B cell (primary cell): ENCODE measurements at regions of chr16 and their contacts with region 1.

Region 1: GRCh38 chr16:83807710-83808572 is at the start of gene HSBP1:
- DNase-seq: peak; percentile 93
- ATAC-seq: peak; percentile 94
- H3K4me3 ChIP-seq: peak within 1 kb of the TSS; percentile 62 to 93 (median 83)
- H3K4me3 Mint-ChIP-seq: peak within 1 kb of the TSS; percentile 97
- H3K27ac ChIP-seq: peak within 1 kb of the TSS; percentile 78 to 91
- H3K27ac Mint-ChIP-seq: peak within 1 kb of the TSS; percentile 98
- H3K4me1 ChIP-seq: peaks cover 50 to 55% of the 10 kb centered on the region in 2 donors
- H3K4me1 Mint-ChIP-seq: peaks cover 62% of the 10 kb centered on the region
- H3K27me3 ChIP-seq: no peaks in the 10 kb centered on the region
- H3K27me3 Mint-ChIP-seq: no peaks in the 10 kb centered on the region
- CTCF ChIP-seq: no peak
- total RNA-seq, gene HSBP1: 39.6 and 45.4 TPM in 2 replicates

Region 2: DNA sequence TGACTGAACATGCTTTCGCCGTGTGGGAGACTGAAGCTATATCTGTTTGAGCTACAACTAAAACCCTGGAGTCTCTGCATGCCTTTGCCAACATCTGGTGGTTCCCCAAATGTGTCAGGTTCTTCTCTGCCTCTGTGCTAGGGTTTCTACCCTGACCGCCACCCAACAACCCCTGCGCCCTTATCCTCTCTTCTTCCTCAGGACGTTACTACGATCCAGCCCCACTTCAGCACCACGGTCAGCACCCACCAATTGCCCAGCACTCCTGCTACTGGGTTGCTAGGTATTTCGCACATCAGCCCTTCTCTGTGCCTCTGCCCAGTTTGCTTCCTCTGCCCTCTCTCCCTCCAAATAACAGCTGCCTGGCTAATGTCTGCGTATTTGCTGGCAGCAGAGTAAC is 106.4 kb before region 1 on chr16:
- CTCF ChIA-PET with region 1: no interaction called
- POLR2A ChIA-PET with region 1: no interaction called
- intact Hi-C with region 1: no loop called
- DNase-seq: peak; percentile 3
- ATAC-seq: no peak
- H3K4me3 ChIP-seq: no peak overlapping the region
- H3K4me3 Mint-ChIP-seq: no peak overlapping the region
- H3K27ac ChIP-seq: no peak overlapping the region
- H3K27ac Mint-ChIP-seq: no peak overlapping the region
- H3K4me1 ChIP-seq: no peaks in the 10 kb centered on the region
- H3K4me1 Mint-ChIP-seq: no peaks in the 10 kb centered on the region
- H3K27me3 ChIP-seq: peaks cover 0 to 10% (median 3%) of the 10 kb centered on the region in 4 experiments
- H3K27me3 Mint-ChIP-seq: peaks cover 17% of the 10 kb centered on the region
- CTCF ChIP-seq: no peak

Region 3: DNA sequence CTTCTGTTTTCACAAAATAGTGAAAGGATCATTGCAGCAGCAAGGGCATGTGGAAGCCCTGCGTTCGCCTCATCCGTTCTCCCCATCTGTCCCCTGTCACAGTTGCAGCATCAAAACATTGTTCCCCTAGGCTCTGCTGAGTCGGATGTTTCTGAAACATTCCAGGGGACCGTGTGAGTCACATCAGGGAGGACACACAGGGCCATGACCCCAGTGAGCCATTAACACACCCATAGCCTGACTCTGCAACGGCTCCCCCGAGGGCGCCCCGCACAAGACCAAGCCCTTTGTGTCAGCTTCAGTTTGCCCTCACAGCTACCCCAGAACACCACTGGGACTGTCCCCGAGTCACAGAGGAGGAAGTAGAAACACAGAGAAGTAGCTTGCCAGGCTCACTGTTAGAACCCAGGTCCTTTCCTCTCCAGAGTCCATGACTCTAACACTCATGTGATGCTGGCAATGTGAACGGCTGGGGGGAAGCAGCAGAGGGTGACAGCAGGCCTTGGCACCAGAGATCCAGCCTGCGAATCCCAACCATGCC is 63.4 kb before region 1 on chr16:
- CTCF ChIA-PET with region 1: no interaction called
- POLR2A ChIA-PET with region 1: no interaction called
- intact Hi-C with region 1: loop called (anchors 10 kb)
- DNase-seq: peak; percentile 61
- ATAC-seq: peak; percentile 91
- H3K4me3 ChIP-seq: no peak overlapping the region
- H3K4me3 Mint-ChIP-seq: peak overlapping the region; percentile 60
- H3K27ac ChIP-seq: peak overlapping the region; percentile 18 to 56
- H3K27ac Mint-ChIP-seq: peak overlapping the region; percentile 7
- H3K4me1 ChIP-seq: peaks cover 12 to 16% of the 10 kb centered on the region in 2 donors
- H3K4me1 Mint-ChIP-seq: peaks cover 15% of the 10 kb centered on the region
- H3K27me3 ChIP-seq: peaks cover 0 to 9% (median 2%) of the 10 kb centered on the region in 4 experiments
- H3K27me3 Mint-ChIP-seq: peaks cover 10% of the 10 kb centered on the region
- CTCF ChIP-seq: no peak

Region 4: DNA sequence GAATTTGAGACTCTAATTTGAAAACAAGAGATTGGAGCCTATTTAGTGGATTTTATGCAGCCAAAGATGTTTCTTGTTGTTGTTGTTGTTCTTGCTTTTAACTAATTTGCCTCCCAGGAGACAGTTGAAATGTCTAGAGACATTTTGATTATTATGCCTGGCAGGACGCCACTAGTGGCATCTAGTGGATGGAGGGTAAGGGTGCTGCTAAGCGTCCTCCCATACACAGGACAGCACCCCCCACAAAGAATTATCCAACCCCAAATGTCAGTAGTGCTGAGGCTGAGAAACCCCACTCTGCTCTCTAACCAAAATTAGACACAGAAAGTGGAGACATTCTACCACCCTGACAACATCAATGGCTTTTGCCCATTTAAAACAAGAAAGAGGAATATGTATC is 15.6 kb before region 1 on chr16:
- CTCF ChIA-PET with region 1: no interaction called
- POLR2A ChIA-PET with region 1: no interaction called
- intact Hi-C with region 1: no loop called
- DNase-seq: no peak
- ATAC-seq: no peak
- H3K4me3 ChIP-seq: no peak overlapping the region
- H3K4me3 Mint-ChIP-seq: no peak overlapping the region
- H3K27ac ChIP-seq: no peak overlapping the region
- H3K27ac Mint-ChIP-seq: no peak overlapping the region
- H3K4me1 ChIP-seq: no peaks in the 10 kb centered on the region
- H3K4me1 Mint-ChIP-seq: no peaks in the 10 kb centered on the region
- H3K27me3 ChIP-seq: no peaks in the 10 kb centered on the region
- H3K27me3 Mint-ChIP-seq: no peaks in the 10 kb centered on the region
- CTCF ChIP-seq: no peak

Region 5: GRCh38 chr16:83826146-83826913 is 18.4 kb after region 1 on chr16:
- CTCF ChIA-PET with region 1: interaction called, 11 read pairs
- POLR2A ChIA-PET with region 1: interaction called, 6 read pairs
- intact Hi-C with region 1: loop called (anchors 2 kb)
- DNase-seq: peak; percentile 83
- ATAC-seq: peak; percentile 94
- H3K4me3 ChIP-seq: no peak overlapping the region
- H3K4me3 Mint-ChIP-seq: no peak overlapping the region
- H3K27ac ChIP-seq: no peak overlapping the region
- H3K27ac Mint-ChIP-seq: peak overlapping the region; percentile 55
- H3K4me1 ChIP-seq: peaks cover 0 to 11% of the 10 kb centered on the region in 2 donors
- H3K4me1 Mint-ChIP-seq: peaks cover 6% of the 10 kb centered on the region
- H3K27me3 ChIP-seq: peaks cover 0 to 2% (median 0%) of the 10 kb centered on the region in 4 experiments
- H3K27me3 Mint-ChIP-seq: peaks cover 8% of the 10 kb centered on the region
- CTCF ChIP-seq: peak; percentile 98

Region 6: DNA sequence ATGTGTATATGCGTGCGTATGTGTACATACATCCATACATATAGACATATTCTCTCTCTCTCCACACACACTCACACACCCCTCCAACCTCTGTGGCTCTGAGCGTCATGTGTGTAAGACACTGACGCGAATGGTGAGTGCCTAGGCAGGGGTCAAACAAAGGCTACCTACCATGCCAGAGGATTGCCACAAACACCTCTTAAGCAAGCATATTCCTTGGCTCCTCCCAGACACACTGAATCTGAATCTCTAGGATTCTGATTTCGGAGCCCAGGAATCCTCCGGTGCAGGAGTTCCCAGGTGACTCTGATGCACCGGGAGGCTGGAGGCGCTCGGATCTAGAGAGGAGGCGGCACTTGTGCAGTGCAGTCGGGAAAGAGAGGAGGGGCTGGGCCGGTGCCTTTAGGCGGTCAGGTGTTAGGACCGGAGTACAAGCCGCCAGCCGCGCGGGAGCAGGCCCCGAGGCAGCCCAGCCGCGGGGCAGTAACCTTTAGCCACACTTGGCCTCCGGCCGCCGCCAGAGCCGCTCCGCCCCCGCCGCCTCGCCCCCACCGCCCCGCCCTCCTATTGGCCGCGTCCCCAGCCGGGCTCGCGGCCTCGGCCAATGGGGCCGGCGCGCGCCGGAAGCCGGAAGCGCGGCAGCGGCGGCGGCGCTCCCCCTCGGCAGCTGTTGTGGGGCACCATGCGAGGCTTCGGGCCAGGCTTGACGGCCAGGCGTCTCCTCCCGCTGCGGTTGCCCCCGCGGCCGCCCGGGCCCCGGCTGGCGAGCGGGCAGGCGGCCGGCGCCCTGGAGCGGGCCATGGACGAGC is 90.7 kb after region 1 on chr16 and contains the start of gene MLYCD:
- CTCF ChIA-PET with region 1: no interaction called
- POLR2A ChIA-PET with region 1: interaction called, 4 read pairs
- intact Hi-C with region 1: loop called (anchors 1 kb)
- DNase-seq: peak; percentile 82
- ATAC-seq: peak; percentile 96
- H3K4me3 ChIP-seq: peak within 1 kb of the TSS; percentile 60 to 79 (median 69)
- H3K4me3 Mint-ChIP-seq: peak within 1 kb of the TSS; percentile 91
- H3K27ac ChIP-seq: peak within 1 kb of the TSS; percentile 41 to 58
- H3K27ac Mint-ChIP-seq: peak within 1 kb of the TSS; percentile 72
- H3K4me1 ChIP-seq: peaks cover 19 to 20% of the 10 kb centered on the region in 2 donors
- H3K4me1 Mint-ChIP-seq: peaks cover 30% of the 10 kb centered on the region
- H3K27me3 ChIP-seq: no peaks in the 10 kb centered on the region
- H3K27me3 Mint-ChIP-seq: peaks cover 13% of the 10 kb centered on the region
- CTCF ChIP-seq: no peak
- total RNA-seq, gene MLYCD: 16.8 and 17.1 TPM in 2 replicates

Region 7: GRCh38 chr16:84144859-84145639 is 337.1 kb after region 1 on chr16 and contains the starts of genes DNAAF1 and HSDL1:
- CTCF ChIA-PET with region 1: no interaction called
- POLR2A ChIA-PET with region 1: no interaction called
- intact Hi-C with region 1: loop called (anchors 1 kb)
- DNase-seq: peak; percentile 96
- ATAC-seq: peak; percentile 88
- H3K4me3 ChIP-seq: peak within 1 kb of the TSS; percentile 46 to 80 (median 75)
- H3K4me3 Mint-ChIP-seq: peak within 1 kb of the TSS; percentile 96
- H3K27ac ChIP-seq: peak within 1 kb of the TSS; percentile 34 to 86
- H3K27ac Mint-ChIP-seq: peak within 1 kb of the TSS; percentile 91
- H3K4me1 ChIP-seq: peaks cover 3 to 14% of the 10 kb centered on the region in 2 donors
- H3K4me1 Mint-ChIP-seq: peaks cover 14% of the 10 kb centered on the region
- H3K27me3 ChIP-seq: peaks cover 0 to 2% (median 0%) of the 10 kb centered on the region in 4 experiments
- H3K27me3 Mint-ChIP-seq: peaks cover 16% of the 10 kb centered on the region
- CTCF ChIP-seq: no peak
- total RNA-seq, gene DNAAF1: 0.29 and 0.30 TPM in 2 replicates
- total RNA-seq, gene HSDL1: 30.8 and 40.2 TPM in 2 replicates

Region 8: DNA sequence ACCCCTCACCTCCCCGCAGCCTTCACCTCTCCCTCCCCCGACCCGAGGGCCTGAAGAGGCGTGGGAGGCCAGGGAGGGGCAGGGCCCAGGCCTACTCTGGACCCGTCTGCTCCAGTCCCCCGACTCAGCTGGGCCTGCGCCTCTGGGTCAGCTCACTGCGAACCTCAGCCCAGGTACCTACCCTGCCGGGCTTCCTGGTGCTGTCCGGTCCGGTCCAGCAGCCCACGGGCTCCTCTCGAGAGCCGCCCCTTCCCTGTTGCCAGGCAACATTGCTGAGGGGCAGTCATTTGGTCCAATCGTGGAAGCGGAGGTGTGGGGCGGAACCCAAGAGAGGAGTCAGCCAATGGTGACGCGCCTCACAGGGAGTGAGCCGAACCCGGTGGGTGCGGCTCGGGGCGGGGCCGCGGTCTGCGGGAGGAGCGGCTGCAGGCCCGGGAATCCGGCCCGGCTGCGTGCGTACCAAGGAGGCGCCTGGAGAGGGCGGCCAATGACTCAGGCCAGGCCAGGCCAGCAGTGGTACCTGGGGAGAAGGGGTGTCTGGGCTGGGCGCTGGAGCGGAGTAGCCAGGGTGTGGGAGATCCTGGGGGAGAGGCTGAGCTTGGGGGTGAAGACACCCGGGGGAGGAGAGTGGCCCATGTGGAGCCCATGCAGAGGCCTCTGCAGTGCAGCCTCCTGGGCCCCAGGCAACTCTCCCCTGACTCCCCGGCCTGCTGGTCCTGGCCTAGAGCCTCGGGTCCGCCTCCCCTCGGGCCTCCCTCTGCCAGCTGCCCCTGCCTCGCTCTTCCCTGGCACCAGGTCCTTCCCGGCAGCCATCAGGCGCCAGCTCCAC is 696.7 kb after region 1 on chr16 and contains the start of gene MEAK7:
- CTCF ChIA-PET with region 1: no interaction called
- POLR2A ChIA-PET with region 1: no interaction called
- intact Hi-C with region 1: loop called (anchors 5 kb)
- DNase-seq: peak; percentile 98
- ATAC-seq: peak; percentile 97
- H3K4me3 ChIP-seq: peak within 1 kb of the TSS; percentile 63 to 88 (median 77)
- H3K4me3 Mint-ChIP-seq: peak within 1 kb of the TSS; percentile 95
- H3K27ac ChIP-seq: peak within 1 kb of the TSS; percentile 47 to 65
- H3K27ac Mint-ChIP-seq: peak within 1 kb of the TSS; percentile 90
- H3K4me1 ChIP-seq: peaks cover 33 to 44% of the 10 kb centered on the region in 2 donors
- H3K4me1 Mint-ChIP-seq: peaks cover 49% of the 10 kb centered on the region
- H3K27me3 ChIP-seq: no peaks in the 10 kb centered on the region
- H3K27me3 Mint-ChIP-seq: no peaks in the 10 kb centered on the region
- CTCF ChIP-seq: no peak
- total RNA-seq, gene MEAK7: 19.3 and 23.0 TPM in 2 replicates